CD8-positive, alpha-beta T cell (primary cell): ENCODE measurements at regions of chr15 and their contacts with region 1.

Region 1: DNA sequence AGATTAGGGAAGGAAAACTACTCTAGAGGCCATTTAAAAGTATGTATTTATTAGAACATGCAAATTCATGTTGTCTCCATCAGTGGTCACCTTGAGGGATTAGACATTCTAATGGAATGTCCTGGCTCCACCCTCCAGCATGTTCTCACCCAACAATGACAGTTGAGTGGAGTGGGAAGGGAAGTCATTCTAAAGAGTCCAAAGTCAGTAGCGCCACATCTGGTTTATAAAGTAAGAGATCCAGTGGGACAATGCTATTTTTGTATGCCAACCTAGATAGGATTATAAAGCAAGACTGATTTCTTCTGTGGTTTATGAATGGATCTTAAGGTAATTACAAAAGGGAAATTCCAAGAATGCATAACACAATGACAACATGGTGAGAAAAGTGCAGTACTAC is 33.3 kb downstream of the SLC24A1 start:
- DNase-seq: no peak
- ATAC-seq: no peak
- H3K4me3 ChIP-seq: no peak overlapping the region
- H3K4me3 Mint-ChIP-seq: no peak overlapping the region
- H3K27ac ChIP-seq: no peak overlapping the region
- H3K27ac Mint-ChIP-seq: no peak overlapping the region
- H3K4me1 ChIP-seq: no peaks in the 10 kb centered on the region
- H3K4me1 Mint-ChIP-seq: peaks cover 4% of the 10 kb centered on the region
- H3K27me3 ChIP-seq: no peaks in the 10 kb centered on the region
- H3K27me3 Mint-ChIP-seq: no peaks in the 10 kb centered on the region
- CTCF ChIP-seq: no peak

Region 2: DNA sequence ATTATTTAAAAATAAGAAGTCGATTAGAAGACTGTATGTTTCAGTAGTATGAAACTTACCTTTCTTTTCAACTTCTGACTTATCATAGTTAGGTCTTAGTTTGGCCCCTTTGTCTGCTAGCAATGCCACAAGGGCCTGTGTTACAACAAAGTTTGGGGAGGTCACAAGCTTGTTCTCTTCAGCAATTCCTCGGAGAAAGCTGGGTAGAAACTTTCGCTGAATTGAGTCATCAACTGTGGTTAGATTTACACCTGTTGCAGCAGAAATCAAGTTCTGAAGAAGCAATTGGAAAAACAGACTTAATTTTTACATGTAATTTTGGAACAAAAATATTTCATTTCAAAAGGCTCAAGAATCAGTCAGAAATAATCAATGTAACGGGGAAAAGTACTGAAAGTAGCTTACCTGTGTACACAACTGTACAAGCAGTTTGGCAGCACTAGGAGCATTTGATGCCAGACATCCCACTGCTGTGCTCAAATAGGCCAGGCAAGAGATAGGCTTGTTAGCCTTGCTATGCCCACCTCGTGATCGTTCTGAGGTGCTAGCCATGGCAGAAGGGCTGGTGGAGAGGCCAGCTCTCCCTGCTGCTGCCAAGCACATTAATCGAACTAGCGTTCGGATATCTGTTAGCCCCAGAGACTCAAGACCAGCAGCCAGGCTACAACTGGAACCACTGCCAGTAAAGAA is 1999.2 kb before region 1 on chr15:
- CTCF ChIA-PET with region 1: no interaction called
- POLR2A ChIA-PET with region 1: no interaction called
- intact Hi-C with region 1: loop called in 1 of 2 experiments (anchors 5 kb)
- DNase-seq: no peak
- ATAC-seq: no peak
- H3K4me3 ChIP-seq: no peak overlapping the region
- H3K4me3 Mint-ChIP-seq: no peak overlapping the region
- H3K27ac ChIP-seq: no peak overlapping the region
- H3K27ac Mint-ChIP-seq: no peak overlapping the region
- H3K4me1 ChIP-seq: no peaks in the 10 kb centered on the region
- H3K4me1 Mint-ChIP-seq: no peaks in the 10 kb centered on the region
- H3K27me3 ChIP-seq: no peaks in the 10 kb centered on the region
- H3K27me3 Mint-ChIP-seq: no peaks in the 10 kb centered on the region
- CTCF ChIP-seq: no peak

Region 3: DNA sequence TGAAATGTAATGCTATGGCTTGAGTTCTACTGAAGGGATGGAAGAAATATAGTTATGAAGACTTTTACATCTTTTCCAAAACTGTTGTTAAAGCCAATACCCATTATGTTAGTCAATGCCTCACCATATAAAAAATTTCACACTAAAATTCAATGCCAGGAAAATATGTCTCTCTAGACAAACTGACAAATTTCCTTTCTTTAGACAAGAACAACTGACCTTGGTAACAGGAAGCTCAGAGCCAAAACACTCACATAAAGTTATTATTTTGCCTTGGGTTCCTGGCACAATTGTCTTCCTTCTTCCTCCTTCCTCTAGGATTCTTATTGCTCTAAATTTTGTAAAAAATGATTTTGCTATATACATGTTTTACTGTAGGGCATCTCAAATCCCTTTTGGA is 70.8 kb before region 1 on chr15:
- CTCF ChIA-PET with region 1: no interaction called
- POLR2A ChIA-PET with region 1: no interaction called
- intact Hi-C with region 1: no loop called
- DNase-seq: no peak
- ATAC-seq: no peak
- H3K4me3 ChIP-seq: no peak overlapping the region
- H3K4me3 Mint-ChIP-seq: peak overlapping the region; percentile 32
- H3K27ac ChIP-seq: peak overlapping the region; percentile 54 to 61
- H3K27ac Mint-ChIP-seq: peak overlapping the region; percentile 85
- H3K4me1 ChIP-seq: peaks cover 20% of the 10 kb centered on the region
- H3K4me1 Mint-ChIP-seq: peaks cover 29% of the 10 kb centered on the region
- H3K27me3 ChIP-seq: no peaks in the 10 kb centered on the region
- H3K27me3 Mint-ChIP-seq: no peaks in the 10 kb centered on the region
- CTCF ChIP-seq: no peak